ENCODE measurements at regions of chr6 and their contacts with region 1.

Region 1: GRCh38 chr6:159174263-159174969 is 5.2 kb downstream of the FNDC1 start:
- DNase-seq: peak; percentile 82
- H3K4me3 ChIP-seq: no peak overlapping the region
- H3K27ac ChIP-seq: no peak overlapping the region
- H3K4me1 ChIP-seq: peaks cover 0 to 20% (median 18%) of the 10 kb centered on the region in 4 donors
- H3K27me3 ChIP-seq: peaks cover 0 to 52% (median 20%) of the 10 kb centered on the region in 3 donors
- CTCF ChIP-seq: peak; percentile 29 to 89 (median 70)
- EP300 ChIP-seq: no peak
- POLR2A ChIP-seq: no peak

Region 2: DNA sequence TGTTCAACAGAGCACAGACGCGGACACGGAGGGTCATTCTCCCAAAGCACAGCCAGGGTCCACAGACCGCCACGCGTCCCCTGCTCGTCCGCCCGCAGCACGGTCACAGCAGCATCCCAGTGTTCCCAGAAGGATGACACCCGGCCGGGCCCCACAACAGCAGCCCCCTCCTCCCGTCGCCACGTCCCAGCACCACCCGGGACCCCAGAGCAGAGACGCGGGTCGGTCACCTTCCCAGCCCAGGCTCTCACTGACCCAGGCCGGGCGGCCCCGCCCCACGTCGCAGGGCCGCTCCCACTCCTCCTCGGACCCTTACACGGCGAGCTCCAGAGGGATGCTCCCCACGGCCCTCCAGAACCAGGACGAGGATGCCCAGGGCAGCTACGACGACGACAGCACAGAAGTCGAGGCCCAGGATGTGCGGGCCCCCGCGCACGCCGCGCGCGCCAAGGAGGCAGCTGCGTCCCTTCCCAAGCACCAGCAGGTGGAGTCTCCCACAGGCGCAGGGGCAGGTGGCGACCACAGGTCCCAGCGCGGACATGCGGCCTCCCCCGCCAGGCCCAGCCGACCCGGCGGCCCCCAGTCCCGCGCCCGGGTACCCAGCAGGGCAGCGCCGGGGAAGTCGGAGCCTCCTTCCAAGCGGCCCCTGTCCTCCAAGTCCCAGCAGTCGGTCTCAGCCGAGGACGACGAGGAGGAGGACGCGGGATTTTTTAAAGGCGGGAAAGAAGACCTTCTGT is 59.1 kb after region 1 on chr6:
- intact Hi-C with region 1: no loop called
- DNase-seq: no peak
- H3K4me3 ChIP-seq: peak overlapping the region in 1 of 4 donors; percentile 13
- H3K27ac ChIP-seq: no peak overlapping the region
- H3K4me1 ChIP-seq: peaks cover 0 to 9% (median 4%) of the 10 kb centered on the region in 4 donors
- H3K27me3 ChIP-seq: peaks cover 0 to 33% (median 15%) of the 10 kb centered on the region in 3 donors
- CTCF ChIP-seq: no peak
- EP300 ChIP-seq: no peak
- POLR2A ChIP-seq: no peak

Region 3: GRCh38 chr6:159252955-159253508 is 78.6 kb after region 1 on chr6:
- intact Hi-C with region 1: loop called (anchors 2 kb)
- DNase-seq: no peak
- H3K4me3 ChIP-seq: peak overlapping the region in 2 of 4 donors; percentile 18 to 21
- H3K27ac ChIP-seq: peak overlapping the region in 2 of 4 donors; percentile 4 to 43
- H3K4me1 ChIP-seq: peaks cover 0 to 15% (median 3%) of the 10 kb centered on the region in 4 donors
- H3K27me3 ChIP-seq: no peaks in the 10 kb centered on the region
- CTCF ChIP-seq: peak in 3 of 4 experiments; percentile 31 to 53 (median 34)
- EP300 ChIP-seq: peak in 1 of 4 donors; percentile 2
- POLR2A ChIP-seq: no peak

Region 4: GRCh38 chr6:159360306-159360705 is 185.9 kb after region 1 on chr6:
- intact Hi-C with region 1: no loop called
- DNase-seq: no peak
- H3K4me3 ChIP-seq: no peak overlapping the region
- H3K27ac ChIP-seq: no peak overlapping the region
- H3K4me1 ChIP-seq: no peaks in the 10 kb centered on the region
- H3K27me3 ChIP-seq: no peaks in the 10 kb centered on the region
- CTCF ChIP-seq: no peak
- EP300 ChIP-seq: no peak
- POLR2A ChIP-seq: no peak

Region 5: GRCh38 chr6:159463119-159463829 is 288.9 kb after region 1 on chr6:
- intact Hi-C with region 1: loop called (anchors 10 kb)
- DNase-seq: no peak
- H3K4me3 ChIP-seq: no peak overlapping the region
- H3K27ac ChIP-seq: no peak overlapping the region
- H3K4me1 ChIP-seq: peaks cover 0 to 14% (median 0%) of the 10 kb centered on the region in 4 donors
- H3K27me3 ChIP-seq: no peaks in the 10 kb centered on the region
- CTCF ChIP-seq: no peak
- EP300 ChIP-seq: no peak
- POLR2A ChIP-seq: no peak